Naive thymus-derived CD4-positive, alpha-beta T cell (primary cell): ENCODE measurements at regions of chr19 and their contacts with region 1.

Region 1: DNA sequence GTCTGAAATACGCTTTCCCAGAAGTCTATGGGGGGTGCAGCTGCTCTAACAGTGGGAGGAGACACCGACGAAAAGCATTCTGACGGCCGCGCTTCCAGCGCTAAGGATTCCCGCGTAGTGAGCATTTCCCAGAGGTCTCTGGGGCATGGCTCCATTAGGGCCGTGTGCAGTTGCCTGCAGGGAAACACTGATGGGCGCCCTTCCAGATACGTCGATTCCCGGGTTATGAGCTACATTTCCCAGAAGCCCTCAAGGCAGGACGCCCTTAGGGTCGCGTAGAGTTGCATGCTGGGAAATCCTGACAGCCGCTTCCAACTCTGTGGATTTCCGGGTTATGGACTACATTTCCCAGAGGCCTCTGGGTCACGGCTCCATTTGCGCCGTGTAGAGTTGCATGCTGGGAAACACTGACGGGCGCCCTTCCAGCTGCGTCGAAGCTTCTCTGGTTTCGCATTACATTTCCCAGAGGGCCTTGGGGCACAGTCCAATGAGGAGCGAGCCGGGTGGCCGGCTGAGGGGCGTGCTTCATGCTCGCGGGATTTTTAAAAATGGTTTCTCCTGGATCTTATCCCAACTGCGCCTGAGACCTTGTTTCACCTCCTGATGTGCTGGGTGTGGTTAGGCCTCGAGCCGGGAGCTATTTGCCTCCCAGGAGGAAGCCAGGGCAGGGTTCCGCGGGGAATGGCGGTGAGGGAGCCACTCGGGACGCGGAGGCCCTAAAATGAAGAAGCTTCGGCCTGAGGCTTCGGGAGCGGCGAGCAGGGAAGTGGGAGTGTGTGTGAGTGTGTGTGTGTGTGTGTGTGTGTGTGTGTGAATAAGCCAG is 17.2 kb upstream of the ZNF331 start:
- DNase-seq: peak; percentile 65 to 93 (median 89)
- ATAC-seq: peak; percentile 100
- H3K4me3 ChIP-seq: peak overlapping the region; percentile 99
- H3K4me3 Mint-ChIP-seq: peak overlapping the region; percentile 94 to 99 (median 98)
- H3K27ac ChIP-seq: peak overlapping the region; percentile 69
- H3K27ac Mint-ChIP-seq: peak overlapping the region; percentile 84 to 96 (median 94)
- H3K4me1 ChIP-seq: peaks cover 9 to 10% of the 10 kb centered on the region in 2 donors
- H3K4me1 Mint-ChIP-seq: peaks cover 10 to 27% (median 18%) of the 10 kb centered on the region in 7 donors
- H3K27me3 ChIP-seq: no peaks in the 10 kb centered on the region
- H3K27me3 Mint-ChIP-seq: no peaks in the 10 kb centered on the region

Region 2: GRCh38 chr19:51703575-51704515 is 1816.9 kb before region 1 on chr19:
- CTCF ChIA-PET with region 1: no interaction called
- POLR2A ChIA-PET with region 1: no interaction called
- intact Hi-C with region 1: loop called in 1 of 2 experiments (anchors 2 kb)
- DNase-seq: peak; percentile 95 to 98 (median 97)
- ATAC-seq: peak; percentile 98
- H3K4me3 ChIP-seq: peak overlapping the region; percentile 98
- H3K4me3 Mint-ChIP-seq: peak overlapping the region; percentile 82 to 92 (median 90)
- H3K27ac ChIP-seq: peak overlapping the region; percentile 99
- H3K27ac Mint-ChIP-seq: peak overlapping the region; percentile 87 to 95 (median 91)
- H3K4me1 ChIP-seq: peaks cover 3 to 9% of the 10 kb centered on the region in 2 donors
- H3K4me1 Mint-ChIP-seq: peaks cover 29 to 50% (median 43%) of the 10 kb centered on the region in 7 donors
- H3K27me3 ChIP-seq: no peaks in the 10 kb centered on the region
- H3K27me3 Mint-ChIP-seq: peaks cover 0 to 7% (median 0%) of the 10 kb centered on the region in 5 donors

Region 3: DNA sequence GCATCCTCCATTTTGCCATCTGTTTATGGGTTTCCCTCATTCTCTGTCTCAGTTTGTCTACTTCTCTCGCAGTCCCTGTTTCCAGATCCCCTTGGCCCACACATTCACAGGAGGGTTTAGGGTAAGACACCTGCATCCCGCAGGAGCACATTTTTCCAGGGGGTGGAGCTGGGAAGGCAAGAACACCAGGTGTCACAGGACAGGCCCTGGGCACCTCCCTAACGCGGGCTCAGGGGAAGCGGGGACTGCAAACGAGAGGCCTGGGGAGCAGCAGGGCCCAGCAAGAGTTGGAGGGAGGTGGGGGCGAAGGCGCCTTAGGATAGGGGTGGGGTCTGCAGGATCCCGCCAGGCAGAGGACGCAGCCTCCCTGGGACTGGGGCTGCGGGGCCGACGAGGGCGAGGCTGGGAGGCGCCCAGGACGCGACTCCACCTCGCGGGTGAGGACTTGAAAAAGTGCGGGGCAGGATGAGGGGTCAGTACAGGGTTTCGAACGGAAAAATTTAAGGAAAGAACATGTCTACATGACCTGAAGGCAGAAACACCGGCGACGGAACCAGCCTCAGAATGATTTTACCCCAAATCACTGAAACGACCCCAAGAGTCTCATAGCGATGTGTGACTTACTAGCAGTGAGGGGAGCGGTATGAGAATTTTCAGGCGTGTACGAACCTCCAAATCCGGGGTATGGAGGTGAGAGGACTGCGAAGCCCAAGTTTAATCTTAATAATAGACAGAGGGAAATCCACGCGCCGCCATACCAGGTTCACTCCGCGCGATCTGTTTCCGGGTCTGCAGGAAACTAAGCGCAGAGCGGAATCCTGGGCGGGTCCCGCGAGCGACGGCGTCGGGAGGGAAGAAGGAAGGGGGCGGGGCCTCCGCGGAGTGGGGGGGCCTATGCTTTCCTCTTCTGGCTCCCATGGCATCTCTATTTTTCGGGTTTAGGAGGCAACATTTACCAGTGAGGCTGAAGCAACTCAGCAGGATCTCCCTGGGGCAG is 483.4 kb before region 1 on chr19:
- CTCF ChIA-PET with region 1: no interaction called
- POLR2A ChIA-PET with region 1: no interaction called
- intact Hi-C with region 1: no loop called
- DNase-seq: no peak
- ATAC-seq: no peak
- H3K4me3 ChIP-seq: no peak overlapping the region
- H3K4me3 Mint-ChIP-seq: peak overlapping the region in 8 of 10 donors; percentile 16 to 68 (median 46)
- H3K27ac ChIP-seq: no peak overlapping the region
- H3K27ac Mint-ChIP-seq: peak overlapping the region in 1 of 9 donors; percentile 14
- H3K4me1 ChIP-seq: no peaks in the 10 kb centered on the region
- H3K4me1 Mint-ChIP-seq: peaks cover 0 to 8% (median 0%) of the 10 kb centered on the region in 7 donors
- H3K27me3 ChIP-seq: no peaks in the 10 kb centered on the region
- H3K27me3 Mint-ChIP-seq: peaks cover 0 to 56% (median 19%) of the 10 kb centered on the region in 5 donors

Region 4: GRCh38 chr19:53365134-53365898 is 155.4 kb before region 1 on chr19 and contains the start of gene ZNF525:
- CTCF ChIA-PET with region 1: no interaction called
- POLR2A ChIA-PET with region 1: no interaction called
- intact Hi-C with region 1: loop called (anchors 1 kb)
- DNase-seq: peak; percentile 94 to 97 (median 96)
- ATAC-seq: peak; percentile 100
- H3K4me3 ChIP-seq: peak within 1 kb of the TSS; percentile 96
- H3K4me3 Mint-ChIP-seq: peak within 1 kb of the TSS; percentile 94 to 98 (median 96)
- H3K27ac ChIP-seq: peak within 1 kb of the TSS; percentile 80
- H3K27ac Mint-ChIP-seq: peak within 1 kb of the TSS; percentile 91 to 98 (median 94)
- H3K4me1 ChIP-seq: no peaks in the 10 kb centered on the region
- H3K4me1 Mint-ChIP-seq: peaks cover 12 to 35% (median 31%) of the 10 kb centered on the region in 7 donors
- H3K27me3 ChIP-seq: no peaks in the 10 kb centered on the region
- H3K27me3 Mint-ChIP-seq: no peaks in the 10 kb centered on the region
- total RNA-seq, gene ZNF525: 11.5 to 33.7 (median 24.2) TPM

Region 5: GRCh38 chr19:53431399-53432087 is 89.2 kb before region 1 on chr19 and contains the start of gene ZNF761:
- CTCF ChIA-PET with region 1: no interaction called
- POLR2A ChIA-PET with region 1: interaction called, 4 read pairs
- intact Hi-C with region 1: loop called (anchors 1 kb)
- DNase-seq: peak; percentile 94 to 99 (median 98)
- ATAC-seq: peak; percentile 100
- H3K4me3 ChIP-seq: peak within 1 kb of the TSS; percentile 91
- H3K4me3 Mint-ChIP-seq: peak within 1 kb of the TSS; percentile 94 to 99 (median 97)
- H3K27ac ChIP-seq: peak within 1 kb of the TSS; percentile 79
- H3K27ac Mint-ChIP-seq: peak within 1 kb of the TSS; percentile 90 to 99 (median 96)
- H3K4me1 ChIP-seq: peaks cover 6 to 16% of the 10 kb centered on the region in 2 donors
- H3K4me1 Mint-ChIP-seq: peaks cover 20 to 55% (median 35%) of the 10 kb centered on the region in 7 donors
- H3K27me3 ChIP-seq: no peaks in the 10 kb centered on the region
- H3K27me3 Mint-ChIP-seq: no peaks in the 10 kb centered on the region
- total RNA-seq, gene ZNF761: 8.0 to 18.8 (median 13.1) TPM

Region 6: GRCh38 chr19:53467485-53468262 is 53.1 kb before region 1 on chr19 and contains the start of gene ZNF813:
- CTCF ChIA-PET with region 1: no interaction called
- POLR2A ChIA-PET with region 1: interaction called, 3 read pairs
- intact Hi-C with region 1: loop called (anchors 1 to 2 kb)
- DNase-seq: peak; percentile 81 to 95 (median 92)
- ATAC-seq: peak; percentile 100
- H3K4me3 ChIP-seq: peak within 1 kb of the TSS; percentile 74
- H3K4me3 Mint-ChIP-seq: peak within 1 kb of the TSS; percentile 88 to 96 (median 94)
- H3K27ac ChIP-seq: peak within 1 kb of the TSS; percentile 73
- H3K27ac Mint-ChIP-seq: peak within 1 kb of the TSS; percentile 76 to 96 (median 90)
- H3K4me1 ChIP-seq: no peaks in the 10 kb centered on the region
- H3K4me1 Mint-ChIP-seq: peaks cover 20 to 45% (median 31%) of the 10 kb centered on the region in 7 donors
- H3K27me3 ChIP-seq: no peaks in the 10 kb centered on the region
- H3K27me3 Mint-ChIP-seq: peaks cover 0 to 24% (median 12%) of the 10 kb centered on the region in 5 donors
- total RNA-seq, gene ZNF813: 2.5 to 11.2 (median 4.6) TPM

Region 7: GRCh38 chr19:53537480-53538383 is 17.0 kb after region 1 on chr19 and contains the start of gene ZNF331:
- CTCF ChIA-PET with region 1: no interaction called
- POLR2A ChIA-PET with region 1: interaction called, 25 read pairs
- intact Hi-C with region 1: loop called (anchors 1 kb)
- DNase-seq: peak; percentile 84 to 97 (median 95)
- ATAC-seq: peak; percentile 90
- H3K4me3 ChIP-seq: peak within 1 kb of the TSS; percentile 65
- H3K4me3 Mint-ChIP-seq: peak within 1 kb of the TSS; percentile 92 to 98 (median 96)
- H3K27ac ChIP-seq: peak within 1 kb of the TSS; percentile 98
- H3K27ac Mint-ChIP-seq: peak within 1 kb of the TSS; percentile 96 to 100 (median 99)
- H3K4me1 ChIP-seq: peaks cover 3 to 6% of the 10 kb centered on the region in 2 donors
- H3K4me1 Mint-ChIP-seq: peaks cover 0 to 37% (median 22%) of the 10 kb centered on the region in 7 donors
- H3K27me3 ChIP-seq: no peaks in the 10 kb centered on the region
- H3K27me3 Mint-ChIP-seq: peaks cover 0 to 2% (median 0%) of the 10 kb centered on the region in 5 donors
- total RNA-seq, gene ZNF331: 18.1 to 318 (median 68.6) TPM

Region 8: DNA sequence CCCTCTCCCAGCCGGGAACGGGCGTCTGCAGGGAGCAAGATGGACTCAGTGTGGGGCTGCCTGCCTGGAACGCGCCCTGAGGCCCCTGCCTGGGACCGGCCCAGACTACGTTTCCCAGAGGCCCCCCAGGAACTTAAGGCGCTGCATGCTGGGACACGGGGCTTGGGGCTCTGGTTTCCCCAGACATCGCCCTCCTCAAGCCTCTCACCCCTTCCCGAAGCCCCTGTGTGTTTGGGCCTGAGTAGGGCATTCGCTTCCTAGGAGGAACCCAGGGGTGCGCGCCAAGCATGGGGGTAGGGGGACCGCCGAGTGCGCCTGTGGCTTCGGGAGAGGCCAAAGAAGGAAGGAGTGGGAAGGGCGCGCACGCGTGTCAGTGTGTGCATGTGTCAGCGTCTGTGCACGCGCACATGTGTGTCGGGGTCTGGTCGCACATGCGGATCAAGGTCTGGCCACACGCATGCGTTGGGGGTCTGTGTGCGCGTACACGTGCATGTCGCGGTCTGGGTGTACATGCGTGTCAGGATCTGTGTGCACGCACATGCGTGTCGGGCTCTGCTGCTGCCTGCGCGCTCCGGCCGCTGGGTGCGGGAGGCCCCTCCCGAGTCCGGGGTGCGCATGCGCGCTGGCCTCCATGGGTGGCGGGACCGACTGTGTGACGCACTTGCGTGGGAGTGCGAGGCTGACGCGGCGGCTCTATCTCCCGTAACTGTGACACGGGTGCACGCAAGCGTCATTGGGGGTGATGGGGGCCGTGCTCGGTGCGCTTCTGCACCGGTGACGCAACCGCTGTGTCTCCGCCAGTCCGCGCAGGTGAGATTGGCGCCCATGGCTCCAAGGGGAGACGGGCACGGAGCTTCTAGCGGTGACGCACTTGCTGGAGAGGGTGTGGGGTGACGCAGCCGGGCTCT is 33.4 kb after region 1 on chr19:
- CTCF ChIA-PET with region 1: no interaction called
- POLR2A ChIA-PET with region 1: interaction called, 6 read pairs
- intact Hi-C with region 1: loop called (anchors 1 kb)
- DNase-seq: peak; percentile 90 to 97 (median 95)
- ATAC-seq: peak; percentile 88
- H3K4me3 ChIP-seq: peak overlapping the region; percentile 67
- H3K4me3 Mint-ChIP-seq: peak overlapping the region; percentile 91 to 99 (median 96)
- H3K27ac ChIP-seq: peak overlapping the region; percentile 97
- H3K27ac Mint-ChIP-seq: peak overlapping the region; percentile 96 to 100 (median 100)
- H3K4me1 ChIP-seq: peaks cover 4 to 6% of the 10 kb centered on the region in 2 donors
- H3K4me1 Mint-ChIP-seq: peaks cover 10 to 46% (median 29%) of the 10 kb centered on the region in 7 donors
- H3K27me3 ChIP-seq: no peaks in the 10 kb centered on the region
- H3K27me3 Mint-ChIP-seq: no peaks in the 10 kb centered on the region

Region 9: GRCh38 chr19:54517483-54517882 is 996.7 kb after region 1 on chr19:
- CTCF ChIA-PET with region 1: no interaction called
- POLR2A ChIA-PET with region 1: no interaction called
- intact Hi-C with region 1: no loop called
- DNase-seq: peak; percentile 6 to 73 (median 36)
- ATAC-seq: peak; percentile 74
- H3K4me3 ChIP-seq: no peak overlapping the region
- H3K4me3 Mint-ChIP-seq: peak overlapping the region in 1 of 10 donors; percentile 13
- H3K27ac ChIP-seq: no peak overlapping the region
- H3K27ac Mint-ChIP-seq: no peak overlapping the region
- H3K4me1 ChIP-seq: peaks cover 10 to 11% of the 10 kb centered on the region in 2 donors
- H3K4me1 Mint-ChIP-seq: peaks cover 19 to 43% (median 28%) of the 10 kb centered on the region in 7 donors
- H3K27me3 ChIP-seq: no peaks in the 10 kb centered on the region
- H3K27me3 Mint-ChIP-seq: peaks cover 11 to 51% (median 38%) of the 10 kb centered on the region in 5 donors